A673 (cell line): ENCODE measurements at regions of chr16 and their contacts with region 1.

Region 1: DNA sequence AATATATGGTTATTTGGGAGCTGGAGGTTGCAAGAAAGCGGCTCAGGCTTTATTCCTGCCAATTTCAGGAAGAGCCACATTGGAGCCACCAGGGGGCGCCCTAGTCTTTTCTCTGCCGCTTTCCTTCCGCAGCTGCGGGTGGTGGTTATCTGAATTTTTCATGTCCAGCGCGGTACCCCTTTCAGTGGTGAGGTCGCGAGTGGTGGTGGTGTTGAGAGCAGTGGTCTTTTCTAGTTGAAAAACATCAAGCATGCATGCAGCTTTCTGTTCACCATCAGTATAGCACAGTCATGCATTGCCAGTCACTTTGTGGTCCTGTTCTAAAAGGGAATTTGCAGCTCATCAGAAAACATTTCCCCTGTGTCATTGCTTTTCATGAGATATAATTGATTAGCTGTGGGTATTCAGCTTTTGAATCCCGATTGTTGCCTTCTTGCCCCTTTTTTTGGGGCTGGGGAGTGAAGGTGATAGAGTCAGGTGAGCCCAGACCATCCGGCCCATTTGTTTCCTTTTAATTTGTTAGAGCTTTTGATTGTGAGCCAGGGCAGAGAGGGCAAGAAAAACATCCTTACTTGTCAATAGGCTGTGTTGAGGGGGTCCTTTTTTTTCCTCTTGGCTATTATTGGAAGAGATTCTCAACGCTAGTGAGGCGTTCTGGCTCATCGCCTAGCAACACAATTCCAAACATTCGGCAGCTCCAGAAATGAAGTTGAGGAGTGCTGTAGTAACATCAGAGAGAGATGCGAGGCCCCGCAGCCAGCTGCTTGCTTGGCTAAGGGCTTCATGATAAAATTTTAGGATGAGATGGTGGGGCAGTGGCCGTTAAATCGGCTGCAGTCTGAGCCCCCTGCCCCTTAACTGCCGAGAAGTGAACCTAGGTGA is 119.0 kb downstream of the SNX29 start:
- DNase-seq: peak; percentile 61
- H3K4me3 ChIP-seq: no peak overlapping the region
- H3K27ac ChIP-seq: no peak overlapping the region
- H3K4me1 ChIP-seq: peaks cover 12% of the 10 kb centered on the region
- H3K27me3 ChIP-seq: no peaks in the 10 kb centered on the region
- CTCF ChIP-seq: peak; percentile 93

Region 2: GRCh38 chr16:11025120-11025531 is 1070.4 kb before region 1 on chr16:
- CTCF ChIA-PET with region 1: interaction called, 14 read pairs
- POLR2A ChIA-PET with region 1: no interaction called
- intact Hi-C with region 1: no loop called
- DNase-seq: no peak
- H3K4me3 ChIP-seq: no peak overlapping the region
- H3K27ac ChIP-seq: no peak overlapping the region
- H3K4me1 ChIP-seq: no peaks in the 10 kb centered on the region
- H3K27me3 ChIP-seq: no peaks in the 10 kb centered on the region
- CTCF ChIP-seq: no peak

Region 3: GRCh38 chr16:12215277-12216105 is 120.0 kb after region 1 on chr16:
- CTCF ChIA-PET with region 1: no interaction called
- POLR2A ChIA-PET with region 1: no interaction called
- intact Hi-C with region 1: loop called (anchors 10 kb)
- DNase-seq: peak; percentile 15
- H3K4me3 ChIP-seq: no peak overlapping the region
- H3K27ac ChIP-seq: no peak overlapping the region
- H3K4me1 ChIP-seq: peaks cover 5% of the 10 kb centered on the region
- H3K27me3 ChIP-seq: no peaks in the 10 kb centered on the region
- CTCF ChIP-seq: 0 out of 2 replicates have a peak, but pooled peaks have one; percentile 28

Region 4: GRCh38 chr16:12271006-12271405 is 175.5 kb after region 1 on chr16:
- CTCF ChIA-PET with region 1: interaction called, 4 read pairs
- POLR2A ChIA-PET with region 1: no interaction called
- intact Hi-C with region 1: loop called (anchors 10 kb)
- DNase-seq: peak; percentile 64
- H3K4me3 ChIP-seq: no peak overlapping the region
- H3K27ac ChIP-seq: no peak overlapping the region
- H3K4me1 ChIP-seq: no peaks in the 10 kb centered on the region
- H3K27me3 ChIP-seq: no peaks in the 10 kb centered on the region
- CTCF ChIP-seq: peak; percentile 59

Region 5: DNA sequence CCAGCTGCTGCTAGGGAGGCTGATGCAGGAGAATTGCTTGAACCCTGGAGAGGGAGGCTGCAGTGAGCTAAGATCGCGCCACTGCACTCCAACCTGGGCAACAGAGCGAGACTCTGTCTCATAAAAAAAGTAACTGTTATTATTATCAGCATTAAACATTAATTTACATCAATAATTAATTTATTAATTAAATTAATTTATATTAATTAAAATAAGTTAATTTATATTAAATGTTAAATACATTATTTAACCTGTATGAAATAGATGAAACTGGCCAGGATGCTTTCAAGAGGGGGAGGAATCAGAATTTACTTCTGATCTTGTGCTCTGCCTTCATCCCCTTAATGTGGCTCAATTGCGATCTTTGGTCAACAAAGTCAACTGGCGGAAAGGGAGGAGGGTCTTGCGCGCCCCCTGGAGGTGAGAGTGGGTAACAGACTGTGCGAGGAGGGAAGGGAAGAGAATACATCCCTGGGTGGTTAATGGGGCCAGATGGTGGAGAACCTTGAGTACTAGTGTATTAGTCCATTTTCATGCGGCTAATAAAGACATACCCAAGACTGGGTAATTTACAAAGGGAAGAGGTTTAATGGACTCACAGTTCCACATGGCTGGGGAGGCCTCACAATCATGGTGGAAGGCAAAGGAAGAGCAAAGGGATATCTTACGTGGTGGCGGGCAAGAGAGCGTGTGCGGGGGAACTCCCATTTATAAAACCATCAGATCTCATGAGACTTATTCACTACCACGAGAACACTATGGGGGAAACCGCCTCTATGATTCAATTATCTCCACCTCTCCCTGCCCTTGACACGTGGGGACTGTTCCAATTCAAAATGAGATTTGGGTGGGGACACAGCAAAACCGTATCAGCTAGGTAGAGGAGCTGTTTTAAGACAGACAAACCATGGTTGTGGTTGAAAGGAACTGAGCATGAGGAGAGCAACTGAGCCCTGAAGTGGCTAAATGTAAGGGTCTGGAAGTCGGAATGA is 723.9 kb after region 1 on chr16:
- CTCF ChIA-PET with region 1: no interaction called
- POLR2A ChIA-PET with region 1: no interaction called
- intact Hi-C with region 1: loop called (anchors 1 kb)
- DNase-seq: peak; percentile 71
- H3K4me3 ChIP-seq: no peak overlapping the region
- H3K27ac ChIP-seq: no peak overlapping the region
- H3K4me1 ChIP-seq: no peaks in the 10 kb centered on the region
- H3K27me3 ChIP-seq: no peaks in the 10 kb centered on the region
- CTCF ChIP-seq: peak; percentile 81

Region 6: GRCh38 chr16:13873835-13874438 is 1778.4 kb after region 1 on chr16:
- CTCF ChIA-PET with region 1: interaction called, 4 read pairs
- POLR2A ChIA-PET with region 1: no interaction called
- intact Hi-C with region 1: loop called (anchors 5 kb)
- DNase-seq: peak; percentile 60
- H3K4me3 ChIP-seq: no peak overlapping the region
- H3K27ac ChIP-seq: no peak overlapping the region
- H3K4me1 ChIP-seq: no peaks in the 10 kb centered on the region
- H3K27me3 ChIP-seq: peaks cover 5% of the 10 kb centered on the region
- CTCF ChIP-seq: peak; percentile 69